Activated naive CD8-positive, alpha-beta T cell treated with anti-CD3 and anti-CD28 coated beads, Interleukin-2, amount 10 ng/mL, durations not matched to agents 7 days and 5 days (primary cell): ENCODE measurements at regions of chrX and their contacts with region 1.

Region 1: DNA sequence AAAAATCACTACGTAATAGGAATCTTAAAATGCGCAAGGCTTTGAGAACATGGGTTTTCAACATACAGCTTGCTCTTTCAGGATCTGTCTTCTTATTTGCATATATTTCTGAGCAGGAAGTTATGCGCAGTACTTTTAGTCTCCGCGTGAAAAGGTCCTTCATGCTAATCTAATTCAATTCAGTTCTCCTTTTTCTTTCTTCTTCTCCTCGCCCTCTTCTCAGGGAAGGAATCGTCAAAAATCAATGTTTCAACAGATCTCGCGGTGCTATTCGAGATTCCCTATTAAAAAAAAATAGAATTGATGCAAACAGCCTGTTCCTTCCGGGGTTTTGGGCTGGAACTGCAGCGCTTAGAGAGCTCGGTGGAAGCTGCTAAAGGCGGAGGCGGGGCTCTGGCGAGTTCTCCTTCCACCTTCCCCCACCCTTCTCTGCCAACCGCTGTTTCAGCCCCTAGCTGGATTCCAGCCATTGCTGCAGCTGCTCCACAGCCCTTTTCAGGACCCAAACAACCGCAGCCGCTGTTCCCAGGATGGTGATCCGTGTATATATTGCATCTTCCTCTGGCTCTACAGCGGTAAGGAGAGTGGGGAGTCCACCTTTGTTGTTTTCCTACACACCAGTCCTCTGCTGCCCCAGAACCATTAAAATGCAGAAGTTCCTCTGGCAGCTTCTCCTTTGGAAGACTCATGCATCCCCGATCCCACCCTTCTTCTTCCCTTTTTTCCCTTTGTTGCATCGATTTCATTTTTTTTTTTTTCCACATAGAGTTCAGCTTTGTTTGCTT is at the starts of genes HMGN5 and SH3BGRL:
- DNase-seq: peak; percentile 62
- ATAC-seq: peak; percentile 98
- H3K4me3 Mint-ChIP-seq: peak within 1 kb of the TSS; percentile 98
- H3K27ac Mint-ChIP-seq: peak within 1 kb of the TSS; percentile 98
- H3K4me1 Mint-ChIP-seq: peaks cover 23% of the 10 kb centered on the region
- H3K27me3 Mint-ChIP-seq: no peaks in the 10 kb centered on the region
- total RNA-seq, gene HMGN5: 1.6 to 2.2 TPM
- total RNA-seq, gene SH3BGRL: 76.8 to 86.3 TPM

Region 2: DNA sequence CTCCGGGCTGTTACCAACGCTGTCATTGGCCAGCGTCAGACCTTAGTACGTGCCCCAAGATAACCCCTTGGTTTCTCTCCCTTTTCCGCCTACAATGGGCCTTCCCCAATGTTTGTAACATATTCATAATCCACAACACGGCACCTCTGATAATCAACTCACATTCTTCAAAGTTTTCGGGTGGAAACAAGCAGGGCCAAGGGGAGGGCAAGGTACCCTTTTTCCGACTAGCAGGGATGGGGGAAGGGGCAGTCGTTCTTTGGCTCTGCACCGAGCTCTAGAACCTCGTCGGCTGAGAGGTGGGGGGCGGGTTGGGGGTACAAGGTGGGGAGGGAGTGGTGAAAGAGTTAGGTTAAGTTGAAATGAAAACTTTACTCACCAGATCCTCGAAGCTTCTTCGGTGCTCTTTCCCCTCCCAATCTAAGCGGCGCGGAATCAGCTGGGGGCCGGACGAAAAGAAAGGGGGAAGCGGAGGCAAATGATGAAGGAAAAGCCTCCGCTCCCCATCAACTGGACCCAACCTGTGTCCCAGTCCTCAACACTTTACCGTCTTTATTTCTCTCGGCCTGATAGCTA is 393.6 kb before region 1 on chrX:
- POLR2A ChIA-PET with region 1: interaction called, 11 read pairs
- DNase-seq: peak; percentile 70
- ATAC-seq: peak; percentile 70
- H3K4me3 Mint-ChIP-seq: peak overlapping the region; percentile 91
- H3K27ac Mint-ChIP-seq: peak overlapping the region; percentile 92
- H3K4me1 Mint-ChIP-seq: peaks cover 17% of the 10 kb centered on the region
- H3K27me3 Mint-ChIP-seq: no peaks in the 10 kb centered on the region

Region 3: GRCh38 chrX:81003491-81004185 is 198.2 kb before region 1 on chrX:
- POLR2A ChIA-PET with region 1: no interaction called
- DNase-seq: no peak
- ATAC-seq: no peak
- H3K4me3 Mint-ChIP-seq: no peak overlapping the region
- H3K27ac Mint-ChIP-seq: no peak overlapping the region
- H3K4me1 Mint-ChIP-seq: no peaks in the 10 kb centered on the region
- H3K27me3 Mint-ChIP-seq: no peaks in the 10 kb centered on the region

Region 4: GRCh38 chrX:81229229-81229628 is 27.4 kb after region 1 on chrX:
- POLR2A ChIA-PET with region 1: no interaction called
- DNase-seq: no peak
- ATAC-seq: no peak
- H3K4me3 Mint-ChIP-seq: no peak overlapping the region
- H3K27ac Mint-ChIP-seq: no peak overlapping the region
- H3K4me1 Mint-ChIP-seq: no peaks in the 10 kb centered on the region
- H3K27me3 Mint-ChIP-seq: no peaks in the 10 kb centered on the region

Region 5: DNA sequence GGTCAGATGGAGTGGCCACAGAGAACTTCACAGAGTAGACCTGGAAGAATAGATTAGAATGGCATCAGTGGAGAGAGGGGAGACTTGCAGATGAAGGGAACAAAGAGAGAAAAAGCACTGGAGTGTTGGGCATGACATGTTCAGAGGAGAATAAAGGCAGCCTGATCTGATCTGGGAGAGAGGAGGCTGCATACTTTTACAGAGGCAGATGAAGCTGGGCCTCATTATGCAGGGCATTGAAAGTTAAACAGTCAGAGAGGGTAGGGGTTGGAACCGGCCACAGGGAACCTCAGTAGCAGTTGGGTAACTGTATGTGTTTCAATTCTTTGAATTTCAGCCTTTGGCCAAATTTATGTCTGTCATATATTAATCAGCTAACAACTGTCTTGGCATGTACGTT is 61.2 kb after region 1 on chrX:
- POLR2A ChIA-PET with region 1: no interaction called
- DNase-seq: no peak
- ATAC-seq: no peak
- H3K4me3 Mint-ChIP-seq: no peak overlapping the region
- H3K27ac Mint-ChIP-seq: no peak overlapping the region
- H3K4me1 Mint-ChIP-seq: peaks cover 2% of the 10 kb centered on the region
- H3K27me3 Mint-ChIP-seq: no peaks in the 10 kb centered on the region

Region 6: DNA sequence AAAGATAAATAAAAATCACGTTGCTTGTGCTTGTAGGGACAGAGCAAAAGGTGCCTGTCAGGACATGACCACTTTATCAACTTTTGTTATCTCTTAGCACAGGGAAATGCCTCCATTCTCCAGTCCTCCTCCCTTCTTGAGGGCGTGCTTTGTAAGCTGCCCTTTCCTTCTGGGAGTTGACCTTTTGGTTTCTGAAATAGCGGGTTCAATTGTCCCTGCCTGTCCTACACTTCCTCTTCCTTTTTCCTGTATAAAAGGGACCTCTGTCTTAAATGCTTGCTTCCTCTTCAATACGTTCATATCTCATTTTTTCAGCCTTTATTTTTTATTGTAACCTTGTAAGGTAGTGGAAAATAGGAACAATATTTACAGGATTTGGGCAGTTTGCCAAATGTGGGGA is 153.6 kb after region 1 on chrX:
- POLR2A ChIA-PET with region 1: no interaction called
- DNase-seq: no peak
- ATAC-seq: no peak
- H3K4me3 Mint-ChIP-seq: no peak overlapping the region
- H3K27ac Mint-ChIP-seq: no peak overlapping the region
- H3K4me1 Mint-ChIP-seq: no peaks in the 10 kb centered on the region
- H3K27me3 Mint-ChIP-seq: no peaks in the 10 kb centered on the region